ENCODE measurements at regions of chr9 and their contacts with region 1.

Region 1: DNA sequence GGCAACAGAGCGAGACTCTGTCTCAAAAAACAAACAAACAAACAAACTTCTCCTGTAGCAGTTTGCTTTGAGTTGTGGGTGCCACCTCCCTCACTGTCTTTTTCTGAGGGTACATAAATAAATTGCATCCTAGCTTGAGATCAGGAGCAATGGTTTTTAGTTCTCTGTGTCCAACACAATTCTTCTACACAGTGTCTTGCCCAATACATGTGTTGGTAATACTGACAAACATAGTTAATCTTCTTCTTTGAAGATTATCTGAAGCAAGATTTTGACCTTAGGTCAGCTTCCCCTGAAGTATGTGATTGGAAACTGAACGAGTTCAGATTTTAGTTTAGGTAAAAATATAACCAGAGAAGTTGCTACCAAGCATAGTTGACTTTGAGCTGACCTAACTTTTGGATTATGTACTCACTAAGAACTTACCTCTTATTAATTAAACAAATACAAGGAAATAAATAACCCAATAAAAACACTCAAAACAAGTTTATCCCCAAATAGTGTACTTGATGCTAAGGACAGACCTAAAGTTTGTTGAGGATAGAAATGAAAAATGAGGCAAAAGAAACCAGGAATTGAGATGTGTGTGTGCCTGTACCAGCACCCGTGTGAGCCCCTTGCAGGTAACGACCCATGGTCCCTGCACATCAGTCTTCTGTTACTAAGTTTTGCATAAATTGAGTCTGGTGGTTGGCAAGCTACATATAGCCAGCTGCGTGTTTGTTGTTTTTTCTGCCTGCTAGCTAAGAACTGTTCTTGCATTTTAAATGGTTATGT is 16.2 kb downstream of the TJP2 start:
- DNase-seq: no peak
- H3K4me3 Mint-ChIP-seq: no peak overlapping the region
- H3K27ac Mint-ChIP-seq: no peak overlapping the region
- H3K4me1 Mint-ChIP-seq: peaks cover 38% of the 10 kb centered on the region
- H3K27me3 Mint-ChIP-seq: no peaks in the 10 kb centered on the region

Region 2: DNA sequence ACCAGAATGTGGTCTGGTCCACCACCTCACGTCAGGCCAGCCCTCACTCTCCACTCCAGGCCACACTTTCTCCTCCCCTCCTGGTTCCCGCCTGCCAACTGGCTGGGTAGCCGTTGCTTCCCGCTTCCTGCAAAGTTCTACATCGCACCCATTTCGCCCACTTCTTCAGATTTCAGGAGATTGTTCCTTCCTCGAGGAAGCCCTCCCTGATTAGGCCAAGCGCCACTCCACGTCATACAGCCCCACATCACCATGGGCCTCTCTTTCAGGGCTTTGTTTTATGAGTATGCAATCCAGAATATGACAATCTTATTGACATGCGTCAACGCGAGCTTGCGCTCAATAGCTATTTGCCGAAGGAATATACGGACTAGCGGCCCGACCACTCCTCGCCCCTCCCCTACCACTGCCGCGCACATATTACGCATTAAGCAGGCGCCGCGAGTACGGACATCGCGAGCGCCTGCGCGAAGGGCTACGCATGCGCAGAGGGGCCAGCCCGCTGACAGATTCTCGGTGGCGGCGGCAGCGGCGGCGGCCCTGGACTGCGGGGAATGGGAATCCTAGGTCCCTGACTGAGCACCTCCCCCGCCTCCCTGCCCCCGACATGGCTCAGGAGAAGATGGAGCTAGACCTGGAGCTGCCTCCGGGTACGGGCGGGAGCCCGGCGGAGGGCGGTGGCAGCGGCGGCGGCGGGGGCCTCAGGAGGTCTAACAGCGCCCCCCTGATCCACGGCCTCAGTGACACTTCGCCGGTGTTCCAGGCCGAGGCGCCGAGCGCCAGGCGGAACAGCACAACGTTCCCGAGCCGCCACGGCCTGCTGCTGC is 410.5 kb before region 1 on chr9:
- intact Hi-C with region 1: no loop called
- DNase-seq: peak; percentile 91
- H3K4me3 Mint-ChIP-seq: no peak overlapping the region
- H3K27ac Mint-ChIP-seq: no peak overlapping the region
- H3K4me1 Mint-ChIP-seq: peaks cover 17% of the 10 kb centered on the region
- H3K27me3 Mint-ChIP-seq: no peaks in the 10 kb centered on the region

Region 3: GRCh38 chr9:69035438-69036308 is 154.6 kb before region 1 on chr9 and contains the start of gene FXN:
- intact Hi-C with region 1: loop called (anchors 5 kb)
- DNase-seq: peak; percentile 77
- H3K4me3 Mint-ChIP-seq: peak within 1 kb of the TSS; percentile 91
- H3K27ac Mint-ChIP-seq: peak within 1 kb of the TSS; percentile 84
- H3K4me1 Mint-ChIP-seq: peaks cover 25% of the 10 kb centered on the region
- H3K27me3 Mint-ChIP-seq: no peaks in the 10 kb centered on the region
- total RNA-seq, gene FXN: 46.8 and 56.7 TPM in 2 replicates

Region 4: GRCh38 chr9:69054989-69055388 is 135.3 kb before region 1 on chr9:
- intact Hi-C with region 1: loop called (anchors 1 kb)
- DNase-seq: no peak
- H3K4me3 Mint-ChIP-seq: no peak overlapping the region
- H3K27ac Mint-ChIP-seq: no peak overlapping the region
- H3K4me1 Mint-ChIP-seq: peaks cover 12% of the 10 kb centered on the region
- H3K27me3 Mint-ChIP-seq: no peaks in the 10 kb centered on the region

Region 5: DNA sequence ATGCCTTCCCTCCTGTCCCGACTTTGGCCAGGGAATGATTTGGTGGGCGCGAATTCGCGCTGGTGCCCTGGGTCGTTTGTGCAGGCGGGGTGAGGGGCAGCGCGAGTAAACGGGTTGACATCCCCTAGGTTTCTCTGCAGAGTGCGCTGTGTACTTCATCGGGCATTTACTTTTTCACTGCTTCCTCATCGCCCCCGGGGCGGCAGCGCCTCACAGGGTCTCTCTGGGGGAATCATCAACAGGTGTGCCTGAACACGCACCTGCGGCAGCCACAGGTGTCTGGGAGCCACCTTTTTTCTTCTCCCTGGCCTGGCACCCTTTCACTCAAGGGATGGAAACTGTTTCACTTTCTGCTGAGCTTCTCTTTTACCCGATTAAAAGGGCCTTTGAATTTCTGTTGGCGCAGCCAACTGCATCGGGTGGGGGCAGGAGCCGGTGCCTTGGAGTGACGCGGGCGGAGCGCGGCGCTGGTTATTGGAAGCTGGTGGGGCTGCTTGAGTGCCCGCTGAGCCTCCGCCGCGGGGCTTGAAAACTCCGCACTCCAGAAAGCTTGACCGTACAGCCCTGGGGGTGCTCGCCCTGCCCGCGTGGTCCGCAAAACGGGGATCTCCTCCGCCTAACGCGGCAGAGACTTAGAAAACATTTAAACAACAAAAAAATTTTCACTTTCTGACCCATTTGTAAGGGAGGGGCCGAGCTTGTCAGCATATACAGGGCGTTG is 68.3 kb before region 1 on chr9:
- intact Hi-C with region 1: loop called (anchors 1 kb)
- DNase-seq: peak; percentile 31
- H3K4me3 Mint-ChIP-seq: peak overlapping the region; percentile 84
- H3K27ac Mint-ChIP-seq: no peak overlapping the region
- H3K4me1 Mint-ChIP-seq: peaks cover 8% of the 10 kb centered on the region
- H3K27me3 Mint-ChIP-seq: peaks cover 8% of the 10 kb centered on the region

Region 6: GRCh38 chr9:69157751-69158466 is 32.4 kb before region 1 on chr9:
- intact Hi-C with region 1: loop called (anchors 1 kb)
- DNase-seq: no peak
- H3K4me3 Mint-ChIP-seq: no peak overlapping the region
- H3K27ac Mint-ChIP-seq: no peak overlapping the region
- H3K4me1 Mint-ChIP-seq: no peaks in the 10 kb centered on the region
- H3K27me3 Mint-ChIP-seq: no peaks in the 10 kb centered on the region

Region 7: GRCh38 chr9:69174616-69175463 is 15.4 kb before region 1 on chr9:
- intact Hi-C with region 1: loop called (anchors 2 kb)
- DNase-seq: no peak
- H3K4me3 Mint-ChIP-seq: peak overlapping the region; percentile 86
- H3K27ac Mint-ChIP-seq: peak overlapping the region; percentile 74
- H3K4me1 Mint-ChIP-seq: peaks cover 64% of the 10 kb centered on the region
- H3K27me3 Mint-ChIP-seq: peaks cover 10% of the 10 kb centered on the region